HepG2 (cell line): ENCODE measurements at regions of chr12 and their contacts with region 1.

Region 1: GRCh38 chr12:103503977-103504376 is 8.2 kb upstream of the C12orf42 start:
- DNase-seq: peak; percentile 13
- ATAC-seq: peak; percentile 92
- H3K4me3 ChIP-seq: no peak overlapping the region
- H3K27ac ChIP-seq: no peak overlapping the region
- H3K4me1 ChIP-seq: no peaks in the 10 kb centered on the region
- H3K27me3 ChIP-seq: no peaks in the 10 kb centered on the region
- CTCF ChIP-seq: peak; percentile 62
- EP300 ChIP-seq: no peak
- POLR2A ChIP-seq: no peak
- RAD21 ChIP-seq: peak; percentile 58; the same call in 1 of the 2 replicates

Region 2: GRCh38 chr12:102948941-102949352 is 555.0 kb before region 1 on chr12:
- CTCF ChIA-PET with region 1: no interaction called
- POLR2A ChIA-PET with region 1: no interaction called
- in situ Hi-C with region 1: no loop called
- intact Hi-C with region 1: loop called (anchors 1 kb)
- DNase-seq: peak; percentile 10
- ATAC-seq: no peak
- H3K4me3 ChIP-seq: no peak overlapping the region; a peak in 1 of 6 replicates
- H3K27ac ChIP-seq: no peak overlapping the region
- H3K4me1 ChIP-seq: peaks cover 20% of the 10 kb centered on the region
- H3K27me3 ChIP-seq: peaks cover 0 to 4% of the 10 kb centered on the region in 2 experiments; a peak in 1 of 5 replicates
- CTCF ChIP-seq: peak; percentile 85
- EP300 ChIP-seq: no peak
- POLR2A ChIP-seq: no peak
- RAD21 ChIP-seq: peak; percentile 69

Region 3: GRCh38 chr12:103326190-103326589 is 177.8 kb before region 1 on chr12:
- CTCF ChIA-PET with region 1: interaction called, 5 read pairs
- POLR2A ChIA-PET with region 1: no interaction called
- in situ Hi-C with region 1: no loop called
- intact Hi-C with region 1: loop called (anchors 1 kb)
- DNase-seq: peak; percentile 20
- ATAC-seq: peak; percentile 71
- H3K4me3 ChIP-seq: no peak overlapping the region
- H3K27ac ChIP-seq: no peak overlapping the region
- H3K4me1 ChIP-seq: no peaks in the 10 kb centered on the region
- H3K27me3 ChIP-seq: no peaks in the 10 kb centered on the region
- CTCF ChIP-seq: peak; percentile 33
- EP300 ChIP-seq: no peak
- POLR2A ChIP-seq: no peak
- RAD21 ChIP-seq: no peak

Region 4: GRCh38 chr12:103422746-103423515 is 81.0 kb before region 1 on chr12:
- CTCF ChIA-PET with region 1: no interaction called
- POLR2A ChIA-PET with region 1: no interaction called
- in situ Hi-C with region 1: no loop called
- intact Hi-C with region 1: loop called (anchors 1 kb)
- DNase-seq: no peak
- ATAC-seq: no peak
- H3K4me3 ChIP-seq: no peak overlapping the region
- H3K27ac ChIP-seq: no peak overlapping the region
- H3K4me1 ChIP-seq: peaks cover 19% of the 10 kb centered on the region; the same call in 1 of the 2 replicates
- H3K27me3 ChIP-seq: no peaks in the 10 kb centered on the region; a peak in 1 of 5 replicates
- CTCF ChIP-seq: no peak
- EP300 ChIP-seq: no peak
- POLR2A ChIP-seq: no peak
- RAD21 ChIP-seq: no peak

Region 5: DNA sequence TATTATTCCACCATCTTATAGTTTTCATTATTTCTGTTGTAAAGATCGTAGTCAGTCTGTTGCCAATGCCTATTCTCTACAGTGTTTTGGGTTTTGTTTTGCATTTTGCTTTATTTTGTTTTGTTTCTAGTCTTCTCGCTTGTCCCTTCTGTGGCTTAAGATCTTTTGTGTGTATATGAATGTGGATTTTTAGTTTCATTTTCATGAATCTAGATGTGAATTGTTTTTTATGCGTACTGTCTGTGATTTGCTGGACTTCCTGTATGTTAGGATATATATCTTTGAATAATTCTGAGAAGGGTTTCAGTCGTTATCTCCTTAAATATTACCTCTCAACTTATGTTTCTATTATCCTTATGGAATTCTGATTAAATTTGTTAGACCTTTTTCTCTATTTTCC is 21.6 kb before region 1 on chr12:
- CTCF ChIA-PET with region 1: no interaction called
- POLR2A ChIA-PET with region 1: no interaction called
- in situ Hi-C with region 1: no loop called
- intact Hi-C with region 1: no loop called
- DNase-seq: no peak
- ATAC-seq: no peak
- H3K4me3 ChIP-seq: no peak overlapping the region
- H3K27ac ChIP-seq: no peak overlapping the region
- H3K4me1 ChIP-seq: no peaks in the 10 kb centered on the region
- H3K27me3 ChIP-seq: no peaks in the 10 kb centered on the region
- CTCF ChIP-seq: no peak
- EP300 ChIP-seq: no peak
- POLR2A ChIP-seq: no peak
- RAD21 ChIP-seq: no peak